Psoas muscle (tissue), 8 donors: ENCODE measurements at regions of chr5 and their contacts with region 1.

Region 1: GRCh38 chr5:151002250-151002649 is 18.1 kb upstream of the GPX3 start:
- DNase-seq: no peak
- ATAC-seq: peak in 3 of 4 donors; percentile 56 to 67 (median 61)
- H3K4me3 ChIP-seq: no peak overlapping the region
- H3K27ac ChIP-seq: no peak overlapping the region
- H3K4me1 ChIP-seq: peaks cover 25% of the 10 kb centered on the region
- H3K27me3 ChIP-seq: no peaks in the 10 kb centered on the region
- CTCF ChIP-seq: peak; percentile 64

Region 2: GRCh38 chr5:151041577-151042268 is 39.5 kb after region 1 on chr5:
- intact Hi-C with region 1: no loop called
- DNase-seq: peak in 1 of 2 donors; percentile 45
- ATAC-seq: no peak
- H3K4me3 ChIP-seq: no peak overlapping the region
- H3K27ac ChIP-seq: peak overlapping the region; percentile 84
- H3K4me1 ChIP-seq: peaks cover 56% of the 10 kb centered on the region
- H3K27me3 ChIP-seq: no peaks in the 10 kb centered on the region
- CTCF ChIP-seq: no peak

Region 3: DNA sequence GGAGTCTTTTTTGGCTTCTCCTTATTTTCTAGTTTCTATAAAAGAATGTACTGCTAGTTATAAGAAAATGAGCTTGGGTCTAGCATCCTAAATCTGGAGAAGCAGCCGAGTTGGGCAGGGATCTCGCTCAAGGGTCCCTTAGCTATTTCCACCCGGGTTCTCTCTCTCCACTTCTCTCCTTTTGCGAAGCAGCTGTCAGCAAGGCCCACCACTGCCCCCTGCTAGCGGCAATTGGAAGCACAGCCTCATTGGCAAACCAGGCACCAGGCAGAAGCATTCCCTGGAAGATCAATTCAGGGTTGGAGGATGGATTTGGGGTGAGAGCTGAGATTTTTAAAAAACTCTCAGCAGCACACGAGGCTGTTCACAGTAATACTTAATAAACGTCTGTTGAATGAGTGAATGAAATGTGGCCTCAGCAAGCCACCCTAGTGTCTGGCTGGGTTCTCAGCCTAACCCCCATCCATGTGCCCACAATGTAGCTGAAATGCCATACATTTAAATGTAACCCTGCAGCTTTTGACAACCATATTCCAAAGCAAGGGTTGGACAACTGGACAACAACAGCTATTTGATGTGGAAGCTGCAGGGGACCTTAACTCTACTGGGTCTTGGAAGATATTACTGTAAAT is 113.1 kb after region 1 on chr5:
- intact Hi-C with region 1: loop called (anchors 2 to 5 kb)
- DNase-seq: peak; percentile 75 to 88
- ATAC-seq: peak; percentile 79 to 86 (median 82)
- H3K4me3 ChIP-seq: no peak overlapping the region
- H3K27ac ChIP-seq: peak overlapping the region; percentile 51
- H3K4me1 ChIP-seq: peaks cover 20% of the 10 kb centered on the region
- H3K27me3 ChIP-seq: no peaks in the 10 kb centered on the region
- CTCF ChIP-seq: peak; percentile 97